Activated CD8-positive, alpha-beta T cell treated with anti-CD3 and anti-CD28 coated beads for 36 hours (primary cell): ENCODE measurements at regions of chr4 and their contacts with region 1.

Region 1: DNA sequence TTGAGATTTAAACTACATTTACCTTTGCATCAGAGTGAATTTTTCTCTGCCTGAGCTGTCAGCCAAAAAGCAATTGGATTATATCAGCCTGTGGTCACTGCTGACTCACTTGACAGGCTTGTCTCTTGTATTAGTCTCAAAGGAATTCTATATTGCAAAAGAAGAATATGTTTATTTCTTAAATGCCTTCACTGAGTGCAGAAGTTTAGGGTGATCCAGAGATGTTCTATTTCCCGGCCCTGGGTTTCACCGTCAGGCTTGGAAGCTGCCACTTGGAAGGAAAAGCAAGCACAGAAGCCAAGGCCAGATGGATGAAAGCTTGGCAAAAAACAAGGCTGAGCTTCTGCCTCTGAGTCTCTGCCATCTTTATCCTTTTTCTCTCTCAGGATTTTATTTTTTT is 80.9 kb downstream of the FAM114A1 start:
- DNase-seq: peak; percentile 16
- ATAC-seq: no peak
- H3K4me3 Mint-ChIP-seq: no peak overlapping the region
- H3K27ac Mint-ChIP-seq: no peak overlapping the region
- H3K4me1 Mint-ChIP-seq: peaks cover 12% of the 10 kb centered on the region
- H3K27me3 Mint-ChIP-seq: no peaks in the 10 kb centered on the region
- CTCF ChIP-seq: no peak

Region 2: GRCh38 chr4:38980903-38981676 is 32.5 kb after region 1 on chr4:
- CTCF ChIA-PET with region 1: interaction called, 3 read pairs
- POLR2A ChIA-PET with region 1: no interaction called
- intact Hi-C with region 1: loop called (anchors 5 kb)
- DNase-seq: peak; percentile 37
- ATAC-seq: peak; percentile 89
- H3K4me3 Mint-ChIP-seq: no peak overlapping the region
- H3K27ac Mint-ChIP-seq: peak overlapping the region; percentile 74
- H3K4me1 Mint-ChIP-seq: peaks cover 49% of the 10 kb centered on the region
- H3K27me3 Mint-ChIP-seq: no peaks in the 10 kb centered on the region
- CTCF ChIP-seq: no peak